PC-3 (cell line): ENCODE measurements at regions of chr7 and their contacts with region 1.

Region 1: DNA sequence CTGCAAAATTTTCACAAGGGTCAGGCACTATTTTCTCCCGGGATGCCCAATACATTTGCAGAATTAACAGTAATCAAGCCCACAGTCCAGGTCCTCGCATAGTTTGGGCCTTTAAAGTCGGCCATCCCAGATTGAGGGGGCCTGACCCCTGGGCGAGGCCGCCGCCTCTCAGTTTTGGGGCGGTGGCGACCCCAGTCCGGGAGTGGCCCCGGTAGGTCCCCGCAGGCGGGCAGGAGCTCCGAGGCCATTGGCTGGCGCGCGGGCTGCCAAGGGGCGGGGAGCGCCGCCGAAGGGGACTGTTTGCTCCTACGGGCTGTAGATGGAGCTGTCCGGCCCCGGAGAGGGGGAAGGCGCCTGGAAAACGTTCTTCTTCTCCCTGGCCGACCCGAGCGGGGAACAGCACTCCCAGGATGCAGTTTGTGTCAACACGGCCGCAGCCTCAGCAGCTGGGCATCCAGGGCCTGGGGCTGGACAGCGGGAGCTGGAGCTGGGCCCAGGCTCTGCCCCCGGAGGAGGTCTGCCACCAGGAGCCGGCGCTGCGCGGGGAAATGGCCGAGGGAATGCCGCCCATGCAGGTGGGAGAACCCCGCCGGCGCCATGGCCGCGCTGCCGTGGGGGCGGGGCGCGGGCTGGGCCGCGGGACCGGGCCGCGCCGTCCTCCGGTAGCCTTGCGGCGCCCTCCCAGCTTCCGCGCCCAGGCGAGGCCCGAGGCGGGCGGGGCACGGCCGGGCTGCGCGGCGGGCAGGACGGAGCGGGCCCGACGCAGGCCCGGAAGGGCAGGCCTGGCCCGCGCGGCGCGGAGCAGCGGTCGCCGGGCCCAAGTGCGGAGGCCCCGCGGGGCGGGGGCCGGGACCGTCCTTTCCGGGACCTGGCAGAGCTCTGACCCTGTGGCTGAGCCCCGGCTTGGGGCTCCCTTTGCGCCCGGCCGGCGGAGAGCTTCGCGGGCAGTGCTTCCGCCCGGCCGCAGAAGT is at the start of gene ZNF282:
- DNase-seq: peak; percentile 89
- ATAC-seq: peak; percentile 89
- H3K4me3 ChIP-seq: peak within 1 kb of the TSS; percentile 92
- H3K27ac ChIP-seq: peak within 1 kb of the TSS; percentile 66
- H3K4me1 ChIP-seq: peaks cover 37% of the 10 kb centered on the region
- H3K27me3 ChIP-seq: no peaks in the 10 kb centered on the region
- CTCF ChIP-seq: peak; percentile 68
- total RNA-seq, gene ZNF282: 31.4 and 39.7 TPM in 2 replicates

Region 2: DNA sequence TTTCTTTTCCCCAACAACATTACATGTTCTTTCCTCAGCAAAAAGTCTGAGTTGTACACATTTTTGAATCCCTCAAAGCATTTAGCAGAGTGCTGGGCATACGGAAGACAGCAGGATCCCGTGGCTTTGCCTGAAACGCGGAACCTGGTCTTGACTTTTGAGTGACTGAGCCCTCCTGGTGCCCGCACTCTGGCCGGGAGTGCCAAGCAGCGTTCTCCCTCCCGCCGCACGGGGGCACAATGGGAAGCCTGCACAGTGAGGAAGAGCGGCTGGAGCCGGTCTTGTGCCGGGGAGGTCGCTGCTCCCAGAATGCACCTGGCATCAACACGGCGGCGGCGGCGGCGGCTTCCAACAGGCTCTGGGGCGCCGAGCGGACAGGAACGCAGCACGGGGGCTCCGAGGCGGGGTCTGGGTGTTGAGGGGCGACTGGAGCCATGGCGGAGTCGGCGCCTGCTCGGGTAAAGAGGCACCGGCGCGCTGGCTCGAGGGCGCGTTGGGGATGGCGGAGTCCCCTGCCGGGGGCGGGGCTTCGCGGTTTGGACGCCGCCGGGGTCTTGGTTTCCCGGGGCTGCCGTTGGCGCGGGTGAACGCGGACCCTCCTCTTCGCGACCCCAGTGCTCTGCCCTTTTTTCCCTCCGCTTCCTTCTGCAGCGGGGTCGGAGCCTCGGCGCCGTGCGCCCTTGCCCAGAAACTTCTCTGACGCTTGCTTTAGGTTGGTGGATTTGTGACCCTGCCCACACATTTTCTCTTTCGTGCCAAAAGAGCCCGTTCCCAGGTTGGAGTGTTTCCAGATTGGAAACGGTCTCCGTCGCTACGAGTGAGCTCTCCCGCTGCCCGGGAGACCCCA is 44.1 kb after region 1 on chr7 and contains the start of gene ZNF212:
- CTCF ChIA-PET with region 1: interaction called, 3 read pairs
- POLR2A ChIA-PET with region 1: interaction called, 4 read pairs
- intact Hi-C with region 1: loop called (anchors 2 kb)
- DNase-seq: peak; percentile 91
- ATAC-seq: peak; percentile 95
- H3K4me3 ChIP-seq: peak within 1 kb of the TSS; percentile 94
- H3K27ac ChIP-seq: peak within 1 kb of the TSS; percentile 92
- H3K4me1 ChIP-seq: peaks cover 32% of the 10 kb centered on the region
- H3K27me3 ChIP-seq: no peaks in the 10 kb centered on the region
- CTCF ChIP-seq: peak; percentile 87
- total RNA-seq, gene ZNF212: 9.7 and 10.4 TPM in 2 replicates

Region 3: DNA sequence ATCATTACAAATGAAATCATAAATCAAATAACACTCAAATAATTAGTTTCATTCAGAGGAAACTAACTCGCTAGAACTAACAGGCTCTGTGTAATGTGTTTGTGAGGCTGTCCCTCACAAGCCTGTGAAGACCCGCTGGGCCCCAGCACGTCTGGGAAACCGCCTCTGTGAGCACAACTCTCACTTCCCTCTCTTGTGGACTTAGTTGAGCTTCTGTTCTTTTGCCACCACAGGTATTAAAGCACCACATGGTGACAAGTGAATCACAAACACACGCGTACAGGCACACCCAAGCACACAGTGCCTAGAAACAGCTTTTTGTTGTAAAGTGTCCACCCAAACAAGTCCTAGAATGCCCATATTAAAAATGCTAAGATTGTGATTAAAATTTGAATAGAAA is 214.4 kb after region 1 on chr7:
- CTCF ChIA-PET with region 1: interaction called, 3 read pairs
- POLR2A ChIA-PET with region 1: no interaction called
- intact Hi-C with region 1: loop called (anchors 10 kb)
- DNase-seq: no peak
- ATAC-seq: no peak
- H3K4me3 ChIP-seq: no peak overlapping the region
- H3K27ac ChIP-seq: no peak overlapping the region
- H3K4me1 ChIP-seq: no peaks in the 10 kb centered on the region
- H3K27me3 ChIP-seq: no peaks in the 10 kb centered on the region
- CTCF ChIP-seq: no peak